ENCODE measurements at regions of chr12 and their contacts with region 1.

Region 1: GRCh38 chr12:72102150-72102549 is 163.5 kb downstream of the TPH2 start:
- DNase-seq: no peak
- H3K4me3 ChIP-seq: no peak overlapping the region
- H3K27ac ChIP-seq: no peak overlapping the region
- H3K27me3 ChIP-seq: peaks cover 0 to 3% (median 0%) of the 10 kb centered on the region in 45 donors
- CTCF ChIP-seq: no peak

Region 2: DNA sequence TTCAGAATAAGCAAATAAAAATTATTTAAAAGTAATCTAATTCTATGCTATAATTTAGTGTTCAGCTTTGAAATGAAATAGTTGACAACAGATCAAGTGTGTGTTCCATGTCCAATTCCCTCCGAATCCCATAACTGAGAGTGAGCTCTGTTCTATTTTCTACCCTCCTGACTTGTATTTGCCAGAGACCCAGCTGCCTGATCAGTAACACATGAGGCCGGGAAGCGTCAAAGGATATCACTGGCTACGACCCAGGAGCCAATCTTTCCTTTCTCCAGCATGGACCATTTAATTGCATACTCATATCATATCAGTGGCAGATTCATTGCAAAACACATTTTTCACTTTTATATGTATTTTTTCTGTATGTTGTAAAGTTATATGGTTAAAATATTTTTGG is 835.5 kb before region 1 on chr12:
- intact Hi-C with region 1: no loop called
- DNase-seq: no peak
- H3K4me3 ChIP-seq: no peak overlapping the region
- H3K27ac ChIP-seq: no peak overlapping the region
- H3K27me3 ChIP-seq: no peaks in the 10 kb centered on the region
- CTCF ChIP-seq: no peak

Region 3: DNA sequence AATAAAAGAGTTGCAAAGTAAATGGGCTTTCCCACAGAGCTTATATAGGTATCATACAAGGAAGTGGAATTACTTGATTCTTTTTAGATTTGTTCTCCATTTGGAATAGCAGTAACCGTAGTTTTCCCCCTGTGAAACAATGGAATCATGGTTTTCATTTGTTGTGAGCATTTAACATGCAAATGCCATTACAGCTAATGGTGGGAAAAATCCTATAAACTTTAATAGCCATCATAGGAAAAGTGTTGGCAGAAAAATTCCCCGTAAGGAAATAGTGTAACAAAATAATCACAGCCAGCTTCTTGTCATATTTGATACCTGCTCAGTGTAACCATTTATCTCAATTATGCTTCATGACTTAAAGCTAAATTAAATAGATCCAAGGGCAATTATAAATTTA is 68.2 kb before region 1 on chr12:
- intact Hi-C with region 1: loop called in 1 of 2 experiments (anchors 2 kb)
- DNase-seq: no peak
- H3K4me3 ChIP-seq: no peak overlapping the region
- H3K27ac ChIP-seq: no peak overlapping the region
- H3K27me3 ChIP-seq: peaks cover 0 to 5% (median 0%) of the 10 kb centered on the region in 45 donors
- CTCF ChIP-seq: no peak